PC-9 (cell line): ENCODE measurements at regions of chr11 and their contacts with region 1.

Region 1: DNA sequence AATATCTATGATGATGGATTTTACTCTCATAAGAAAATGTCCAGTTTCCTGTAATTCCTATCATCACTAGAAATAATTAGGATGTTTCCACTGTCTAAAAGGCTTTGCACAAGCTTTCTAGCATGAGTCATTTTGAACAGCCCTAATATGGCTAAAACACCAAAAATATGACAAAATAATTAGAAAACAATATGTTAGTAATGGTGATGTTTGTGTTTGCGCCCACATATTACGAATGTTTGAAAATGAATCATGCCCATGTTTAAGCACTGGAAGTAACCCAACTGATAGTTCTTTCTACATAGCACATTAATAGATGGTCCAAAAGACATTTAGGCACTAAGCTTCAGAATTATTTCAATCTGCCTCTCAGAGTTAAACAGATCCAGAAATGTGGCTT is 96.0 kb downstream of the TRPC6 start:
- DNase-seq: no peak
- H3K4me3 ChIP-seq: no peak overlapping the region
- H3K27ac ChIP-seq: no peak overlapping the region
- H3K4me1 ChIP-seq: no peaks in the 10 kb centered on the region
- H3K27me3 ChIP-seq: no peaks in the 10 kb centered on the region
- CTCF ChIP-seq: no peak

Region 2: GRCh38 chr11:101508370-101508769 is 20.6 kb after region 1 on chr11:
- CTCF ChIA-PET with region 1: interaction called, 14 read pairs
- POLR2A ChIA-PET with region 1: no interaction called
- intact Hi-C with region 1: no loop called
- DNase-seq: no peak
- H3K4me3 ChIP-seq: no peak overlapping the region
- H3K27ac ChIP-seq: no peak overlapping the region
- H3K4me1 ChIP-seq: no peaks in the 10 kb centered on the region
- H3K27me3 ChIP-seq: no peaks in the 10 kb centered on the region
- CTCF ChIP-seq: no peak

Region 3: DNA sequence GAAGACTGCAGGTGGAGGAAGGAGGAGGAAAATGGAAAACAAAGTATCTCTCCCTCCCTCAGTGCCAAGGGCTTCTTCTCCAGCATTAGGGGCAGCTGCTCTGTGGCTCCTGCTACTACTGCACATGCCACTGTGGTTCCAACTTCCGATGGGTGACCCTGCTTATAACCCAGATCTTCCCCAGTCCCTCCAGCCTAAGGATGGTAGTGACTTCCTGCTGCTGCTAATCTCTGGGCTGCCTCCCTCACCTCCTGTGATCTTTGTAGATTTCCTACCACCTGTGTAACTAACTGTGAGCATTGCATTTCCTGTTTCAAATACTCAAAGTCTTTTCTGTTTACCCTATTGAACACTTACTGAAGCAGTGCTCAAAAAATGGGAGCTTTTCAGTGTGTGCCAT is 124.7 kb after region 1 on chr11:
- CTCF ChIA-PET with region 1: no interaction called
- POLR2A ChIA-PET with region 1: no interaction called
- intact Hi-C with region 1: no loop called
- DNase-seq: no peak
- H3K4me3 ChIP-seq: no peak overlapping the region
- H3K27ac ChIP-seq: no peak overlapping the region
- H3K4me1 ChIP-seq: no peaks in the 10 kb centered on the region
- H3K27me3 ChIP-seq: no peaks in the 10 kb centered on the region
- CTCF ChIP-seq: no peak